ENCODE measurements at regions of chr4 and their contacts with region 1.

Region 1: GRCh38 chr4:101347557-101348366 is 436 bp upstream of the PPP3CA start:
- DNase-seq: peak; percentile 93 to 99
- H3K4me3 ChIP-seq: peak overlapping the region; percentile 89 to 98
- H3K27ac ChIP-seq: peak overlapping the region; percentile 91 to 95
- H3K4me1 ChIP-seq: peaks cover 0 to 17% of the 10 kb centered on the region in 2 donors
- H3K27me3 ChIP-seq: no peaks in the 10 kb centered on the region
- CTCF ChIP-seq: peak in 1 of 3 experiments; percentile 13

Region 2: DNA sequence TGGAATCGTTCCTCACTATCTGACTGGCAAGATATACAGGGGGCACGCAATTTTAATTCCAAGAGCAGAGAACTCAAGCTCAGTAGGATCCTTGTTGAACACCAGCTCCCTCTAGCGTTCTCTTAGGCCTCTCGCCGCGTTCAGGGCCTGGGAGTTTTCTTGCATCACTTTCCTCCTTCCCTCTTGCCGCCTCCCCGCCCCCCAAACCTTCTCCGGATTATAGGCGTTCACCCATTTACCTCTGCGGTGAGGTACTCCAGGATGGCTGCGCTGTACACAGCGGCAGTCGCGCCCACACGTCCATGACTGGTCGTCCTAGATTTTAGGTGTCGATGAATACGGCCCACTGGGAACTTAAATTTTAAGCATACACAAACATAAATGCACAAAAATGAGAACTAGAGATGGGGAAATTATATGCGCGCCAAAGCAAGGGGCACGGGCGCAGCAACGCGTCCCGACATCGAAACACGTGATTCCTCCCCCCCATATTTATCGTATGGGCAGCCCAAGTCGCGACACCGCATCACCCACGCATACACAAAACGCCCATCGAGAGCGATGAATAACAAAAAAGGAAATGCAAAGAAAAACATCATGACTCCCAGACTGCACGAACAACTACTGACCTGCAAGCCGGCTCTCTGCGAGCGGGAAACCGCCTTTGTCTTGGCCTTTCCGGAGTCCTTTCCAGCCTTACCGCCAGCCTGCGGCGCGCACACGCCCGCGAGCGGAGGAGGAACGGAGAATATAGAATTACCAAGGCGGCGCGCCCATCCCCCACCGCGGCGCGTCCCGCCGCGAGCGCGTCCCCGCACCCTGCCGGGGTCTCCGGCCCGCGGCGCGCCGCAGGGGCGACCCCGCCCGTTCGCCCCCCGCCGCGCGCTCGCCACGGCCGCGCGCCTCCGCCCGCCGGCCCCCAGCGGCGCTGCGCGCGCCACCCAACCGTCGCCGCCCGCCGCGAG is 1398.4 kb before region 1 on chr4:
- intact Hi-C with region 1: loop called (anchors 2 kb)
- DNase-seq: peak; percentile 68 to 96
- H3K4me3 ChIP-seq: peak overlapping the region; percentile 69 to 93
- H3K27ac ChIP-seq: peak overlapping the region; percentile 97 to 99
- H3K4me1 ChIP-seq: peaks cover 0 to 12% of the 10 kb centered on the region in 2 donors
- H3K27me3 ChIP-seq: no peaks in the 10 kb centered on the region
- CTCF ChIP-seq: peak; percentile 61 to 89 (median 83)

Region 3: GRCh38 chr4:100311171-100311570 is 1036.6 kb before region 1 on chr4:
- intact Hi-C with region 1: loop called (anchors 10 kb)
- DNase-seq: no peak
- H3K4me3 ChIP-seq: no peak overlapping the region
- H3K27ac ChIP-seq: no peak overlapping the region
- H3K4me1 ChIP-seq: no peaks in the 10 kb centered on the region
- H3K27me3 ChIP-seq: no peaks in the 10 kb centered on the region
- CTCF ChIP-seq: no peak

Region 4: GRCh38 chr4:101238706-101239105 is 109.1 kb before region 1 on chr4:
- intact Hi-C with region 1: loop called (anchors 5 kb)
- DNase-seq: no peak
- H3K4me3 ChIP-seq: no peak overlapping the region
- H3K27ac ChIP-seq: peak overlapping the region in 1 of 2 donors; percentile 28
- H3K4me1 ChIP-seq: peaks cover 0 to 6% of the 10 kb centered on the region in 2 donors
- H3K27me3 ChIP-seq: no peaks in the 10 kb centered on the region
- CTCF ChIP-seq: no peak

Region 5: GRCh38 chr4:101419324-101420135 is 71.8 kb after region 1 on chr4:
- intact Hi-C with region 1: no loop called
- DNase-seq: no peak
- H3K4me3 ChIP-seq: no peak overlapping the region
- H3K27ac ChIP-seq: no peak overlapping the region
- H3K4me1 ChIP-seq: no peaks in the 10 kb centered on the region
- H3K27me3 ChIP-seq: no peaks in the 10 kb centered on the region
- CTCF ChIP-seq: no peak

Region 6: GRCh38 chr4:101475246-101475645 is 127.5 kb after region 1 on chr4:
- intact Hi-C with region 1: no loop called
- DNase-seq: no peak
- H3K4me3 ChIP-seq: no peak overlapping the region
- H3K27ac ChIP-seq: no peak overlapping the region
- H3K4me1 ChIP-seq: no peaks in the 10 kb centered on the region
- H3K27me3 ChIP-seq: no peaks in the 10 kb centered on the region
- CTCF ChIP-seq: no peak

Region 7: DNA sequence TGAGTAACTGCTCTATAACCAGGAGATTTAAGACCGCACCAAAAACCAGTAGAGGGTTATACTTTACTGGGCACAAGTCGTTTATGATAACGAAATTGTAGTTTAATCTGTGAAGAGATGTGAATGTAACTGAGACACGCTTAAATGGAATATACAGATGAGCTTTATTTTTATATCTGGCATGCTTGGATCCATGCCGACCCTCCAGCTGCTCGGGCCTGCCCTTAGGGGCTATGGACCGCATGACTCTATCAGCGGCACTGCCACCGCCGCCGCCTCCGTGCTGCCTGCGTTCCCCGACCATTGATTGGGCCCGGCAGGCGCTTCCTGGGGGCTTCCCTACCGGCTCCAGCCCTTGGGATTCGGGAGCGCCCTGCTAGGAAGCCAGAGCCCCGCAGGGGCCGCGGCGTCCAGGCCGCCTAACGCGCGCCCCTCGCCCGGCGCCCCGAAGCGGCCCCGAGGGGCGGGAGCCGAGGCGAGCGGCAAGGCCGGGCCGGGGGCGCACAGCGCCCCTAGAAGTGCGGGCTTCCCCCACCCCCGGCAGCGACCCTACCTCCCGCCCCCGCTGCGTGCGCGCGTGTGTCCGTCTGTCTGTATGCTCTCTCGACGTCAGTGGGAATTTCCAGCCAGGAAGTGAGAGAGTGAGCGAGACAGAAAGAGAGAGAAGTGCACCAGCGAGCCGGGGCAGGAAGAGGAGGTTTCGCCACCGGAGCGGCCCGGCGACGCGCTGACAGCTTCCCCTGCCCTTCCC is 1153.1 kb after region 1 on chr4 and contains the start of gene NFKB1:
- intact Hi-C with region 1: loop called (anchors 5 kb)
- DNase-seq: peak; percentile 19 to 82
- H3K4me3 ChIP-seq: peak within 1 kb of the TSS; percentile 88 to 98
- H3K27ac ChIP-seq: peak within 1 kb of the TSS; percentile 93 to 99
- H3K4me1 ChIP-seq: peaks cover 0 to 20% of the 10 kb centered on the region in 2 donors
- H3K27me3 ChIP-seq: no peaks in the 10 kb centered on the region
- CTCF ChIP-seq: no peak
- total RNA-seq, gene NFKB1: 34.5 TPM